Mammary epithelial cell (primary cell): ENCODE measurements at regions of chr11 and their contacts with region 1.

Region 1: GRCh38 chr11:19071255-19071654 is 10.7 kb upstream of the MRGPRX2 start:
- DNase-seq: peak; percentile 77
- H3K4me3 ChIP-seq: peak overlapping the region in 1 of 3 experiments; percentile 23
- H3K27ac ChIP-seq: no peak overlapping the region
- H3K4me1 ChIP-seq: no peaks in the 10 kb centered on the region
- H3K27me3 ChIP-seq: no peaks in the 10 kb centered on the region
- CTCF ChIP-seq: peak; percentile 96 to 98

Region 2: GRCh38 chr11:18981897-18982296 is 89.4 kb before region 1 on chr11:
- CTCF ChIA-PET with region 1: interaction called, 31 read pairs
- dilution Hi-C with region 1: no loop called
- in situ Hi-C with region 1: no loop called
- intact Hi-C with region 1: no loop called
- DNase-seq: no peak
- H3K4me3 ChIP-seq: no peak overlapping the region
- H3K27ac ChIP-seq: no peak overlapping the region
- H3K4me1 ChIP-seq: peaks cover 5% of the 10 kb centered on the region
- H3K27me3 ChIP-seq: peaks cover 15% of the 10 kb centered on the region
- CTCF ChIP-seq: no peak

Region 3: DNA sequence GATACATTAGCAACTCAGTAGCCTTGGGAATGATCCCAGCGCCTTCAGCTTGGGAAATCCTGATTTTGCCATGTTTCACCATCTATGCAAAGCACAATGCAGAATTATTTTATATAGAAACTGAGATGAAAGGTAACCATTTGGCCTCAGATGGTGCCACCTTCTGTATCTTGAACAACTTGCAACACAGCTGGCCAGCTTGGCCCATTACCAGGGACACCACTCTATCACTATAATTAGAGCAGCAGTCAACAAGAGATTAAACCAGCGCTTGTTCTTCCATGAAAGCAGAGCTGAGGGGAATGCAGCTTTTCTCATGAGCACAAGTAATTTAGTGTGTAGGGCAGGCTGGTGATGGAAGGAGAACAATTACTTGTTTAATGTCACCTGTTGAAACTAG is 39.0 kb after region 1 on chr11:
- CTCF ChIA-PET with region 1: no interaction called
- dilution Hi-C with region 1: no loop called
- in situ Hi-C with region 1: no loop called
- intact Hi-C with region 1: no loop called
- DNase-seq: no peak
- H3K4me3 ChIP-seq: no peak overlapping the region
- H3K27ac ChIP-seq: no peak overlapping the region
- H3K4me1 ChIP-seq: no peaks in the 10 kb centered on the region
- H3K27me3 ChIP-seq: no peaks in the 10 kb centered on the region
- CTCF ChIP-seq: peak in 1 of 2 donors; percentile 21

Region 4: GRCh38 chr11:19259487-19260345 is 188.5 kb after region 1 on chr11:
- CTCF ChIA-PET with region 1: interaction called, 4 read pairs
- dilution Hi-C with region 1: no loop called
- in situ Hi-C with region 1: no loop called
- intact Hi-C with region 1: loop called (anchors 1 kb)
- DNase-seq: peak; percentile 36
- H3K4me3 ChIP-seq: no peak overlapping the region
- H3K27ac ChIP-seq: no peak overlapping the region
- H3K4me1 ChIP-seq: no peaks in the 10 kb centered on the region
- H3K27me3 ChIP-seq: no peaks in the 10 kb centered on the region
- CTCF ChIP-seq: peak; percentile 94 to 99

Region 5: GRCh38 chr11:19311308-19312030 is 240.2 kb after region 1 on chr11:
- CTCF ChIA-PET with region 1: no interaction called
- dilution Hi-C with region 1: no loop called
- in situ Hi-C with region 1: loop called (anchors 10 to 25 kb)
- intact Hi-C with region 1: loop called (anchors 1 kb)
- DNase-seq: peak; percentile 24
- H3K4me3 ChIP-seq: no peak overlapping the region
- H3K27ac ChIP-seq: no peak overlapping the region
- H3K4me1 ChIP-seq: no peaks in the 10 kb centered on the region
- H3K27me3 ChIP-seq: no peaks in the 10 kb centered on the region
- CTCF ChIP-seq: peak; percentile 89 to 95